ENCODE measurements at regions of chr12 and their contacts with region 1.

Region 1: DNA sequence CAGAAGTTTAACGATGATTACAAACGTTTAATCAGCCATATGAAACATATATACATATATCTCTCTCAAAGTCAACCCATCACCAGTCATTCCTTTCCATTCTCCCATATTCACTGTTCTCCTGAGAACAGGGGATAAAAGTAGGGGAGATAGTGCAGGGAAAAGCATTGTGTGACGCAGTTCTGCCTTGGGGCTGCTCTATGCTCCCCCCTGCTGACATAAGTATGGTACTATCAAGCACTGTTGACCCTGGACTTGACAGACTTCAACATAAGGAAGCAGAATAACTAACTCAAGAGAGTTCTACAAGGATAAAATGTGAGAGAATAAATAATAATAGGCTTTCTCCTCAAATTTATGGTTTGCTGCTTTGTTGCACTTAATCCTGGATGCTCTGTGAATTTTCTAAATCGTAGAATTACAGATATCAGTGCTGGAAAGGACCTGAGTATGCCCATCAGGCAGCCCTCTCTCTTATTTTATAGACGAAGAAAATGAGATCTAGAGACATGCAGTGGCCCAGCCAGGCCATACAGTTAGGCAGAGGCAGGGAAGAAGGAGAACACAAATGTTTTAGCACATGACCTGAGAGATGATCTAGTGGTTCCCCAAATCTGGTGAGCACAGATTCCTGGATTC is 87.2 kb downstream of the SCN8A start:
- DNase-seq: peak; percentile 43
- ATAC-seq: peak; percentile 98
- H3K4me3 ChIP-seq: no peak overlapping the region
- H3K27ac ChIP-seq: no peak overlapping the region
- H3K4me1 ChIP-seq: no peaks in the 10 kb centered on the region
- H3K27me3 ChIP-seq: no peaks in the 10 kb centered on the region
- CTCF ChIP-seq: peak; percentile 92

Region 2: GRCh38 chr12:51531978-51532497 is 146.2 kb before region 1 on chr12:
- CTCF ChIA-PET with region 1: interaction called, 3 read pairs
- POLR2A ChIA-PET with region 1: no interaction called
- in situ Hi-C with region 1: no loop called
- intact Hi-C with region 1: loop called (anchors 10 kb)
- DNase-seq: peak; percentile 73
- ATAC-seq: peak; percentile 95
- H3K4me3 ChIP-seq: no peak overlapping the region
- H3K27ac ChIP-seq: no peak overlapping the region
- H3K4me1 ChIP-seq: peaks cover 6% of the 10 kb centered on the region
- H3K27me3 ChIP-seq: peaks cover 2% of the 10 kb centered on the region; the same call in 1 of the 2 replicates
- CTCF ChIP-seq: peak; percentile 95

Region 3: GRCh38 chr12:51695241-51696010 is 17.2 kb after region 1 on chr12:
- CTCF ChIA-PET with region 1: no interaction called
- POLR2A ChIA-PET with region 1: no interaction called
- in situ Hi-C with region 1: no loop called
- intact Hi-C with region 1: no loop called
- DNase-seq: no peak
- ATAC-seq: no peak
- H3K4me3 ChIP-seq: no peak overlapping the region
- H3K27ac ChIP-seq: no peak overlapping the region
- H3K4me1 ChIP-seq: no peaks in the 10 kb centered on the region
- H3K27me3 ChIP-seq: no peaks in the 10 kb centered on the region
- CTCF ChIP-seq: no peak

Region 4: GRCh38 chr12:52004042-52004648 is 325.9 kb after region 1 on chr12:
- CTCF ChIA-PET with region 1: no interaction called
- POLR2A ChIA-PET with region 1: no interaction called
- in situ Hi-C with region 1: no loop called
- intact Hi-C with region 1: no loop called
- DNase-seq: no peak
- ATAC-seq: peak; percentile 78
- H3K4me3 ChIP-seq: no peak overlapping the region
- H3K27ac ChIP-seq: no peak overlapping the region
- H3K4me1 ChIP-seq: no peaks in the 10 kb centered on the region
- H3K27me3 ChIP-seq: peaks cover 4% of the 10 kb centered on the region; the same call in 1 of the 2 replicates
- CTCF ChIP-seq: peak; percentile 85